Endothelial cell of umbilical vein (primary cell): ENCODE measurements at regions of chr20 and their contacts with region 1.

Region 1: DNA sequence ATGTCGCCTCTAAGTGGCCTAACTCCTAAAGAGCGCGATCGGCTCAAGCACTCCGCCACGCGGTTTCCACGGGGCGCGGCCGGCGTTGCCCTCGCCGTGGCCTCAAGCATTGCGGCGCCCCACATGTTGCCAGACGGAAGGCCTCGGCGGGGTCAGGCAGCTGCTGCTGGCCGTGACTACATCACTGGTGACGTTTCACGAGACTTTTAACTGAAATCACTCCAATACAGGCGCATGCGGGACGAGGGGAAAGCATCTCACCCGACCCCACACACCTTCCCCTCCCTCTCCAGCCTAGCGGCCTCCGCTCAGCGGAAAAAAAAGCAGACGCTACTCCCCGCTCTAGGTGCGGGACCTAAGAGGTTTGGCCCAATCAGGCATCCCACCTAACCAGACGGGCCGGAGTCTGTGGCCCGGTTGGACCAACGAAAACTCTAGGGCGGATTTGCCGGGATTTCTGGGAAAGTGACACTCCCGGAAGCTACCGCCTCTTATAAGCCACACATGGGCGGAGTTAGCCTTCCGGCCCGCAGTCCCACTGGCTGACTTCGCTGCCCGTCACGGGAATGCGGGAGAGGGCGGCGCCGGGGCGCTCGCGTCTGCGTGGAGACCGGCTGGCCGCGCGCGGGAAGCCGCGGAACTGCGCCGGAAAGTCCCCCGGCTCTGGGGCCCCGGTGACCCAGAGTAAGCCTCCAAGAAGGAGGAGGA is at the start of gene NXT1:
- DNase-seq: peak; percentile 98
- H3K4me3 ChIP-seq: peak within 1 kb of the TSS; percentile 20 to 79 (median 77)
- H3K27ac ChIP-seq: peak within 1 kb of the TSS; percentile 94
- H3K4me1 ChIP-seq: peaks cover 19% of the 10 kb centered on the region
- H3K27me3 ChIP-seq: no peaks in the 10 kb centered on the region
- CTCF ChIP-seq: no peak
- POLR2A ChIP-seq: peak; percentile 19
- total RNA-seq, gene NXT1: 27.1 and 28.5 TPM in 2 replicates

Region 2: DNA sequence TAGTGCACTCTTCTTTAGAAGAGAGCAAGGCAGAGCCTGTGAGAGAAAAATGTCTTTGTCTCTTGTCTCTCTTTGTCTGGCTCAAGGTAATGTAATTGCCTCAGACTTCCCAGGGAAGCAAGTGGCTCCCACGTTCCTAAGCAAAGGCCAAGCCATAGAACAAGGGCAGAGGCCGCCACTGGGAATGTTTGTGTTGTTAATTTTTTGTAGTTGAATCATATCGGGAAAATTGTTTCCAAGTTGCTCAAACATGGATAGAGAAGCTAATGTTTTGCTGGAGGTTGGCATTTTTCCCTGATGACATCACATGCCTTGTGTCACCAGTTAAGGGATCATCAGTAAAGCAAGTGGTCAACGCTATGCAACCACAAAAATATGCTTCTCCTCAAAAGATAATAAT is 554.5 kb before region 1 on chr20:
- CTCF ChIA-PET with region 1: no interaction called
- POLR2A ChIA-PET with region 1: no interaction called
- dilution Hi-C with region 1: no loop called
- intact Hi-C with region 1: loop called (anchors 5 kb)
- DNase-seq: peak; percentile 98
- H3K4me3 ChIP-seq: no peak overlapping the region
- H3K27ac ChIP-seq: peak overlapping the region; percentile 100
- H3K4me1 ChIP-seq: peaks cover 43% of the 10 kb centered on the region
- H3K27me3 ChIP-seq: no peaks in the 10 kb centered on the region
- CTCF ChIP-seq: no peak
- POLR2A ChIP-seq: peak; percentile 50

Region 3: GRCh38 chr20:23361598-23362384 is 11.4 kb after region 1 on chr20 and contains the start of gene GZF1:
- CTCF ChIA-PET with region 1: interaction called, 40 read pairs
- POLR2A ChIA-PET with region 1: interaction called, 10 read pairs
- dilution Hi-C with region 1: no loop called
- intact Hi-C with region 1: loop called (anchors 1 kb)
- DNase-seq: peak; percentile 100
- H3K4me3 ChIP-seq: peak within 1 kb of the TSS; percentile 65 to 73 (median 67)
- H3K27ac ChIP-seq: peak within 1 kb of the TSS; percentile 90
- H3K4me1 ChIP-seq: peaks cover 40% of the 10 kb centered on the region
- H3K27me3 ChIP-seq: no peaks in the 10 kb centered on the region
- CTCF ChIP-seq: no peak
- POLR2A ChIP-seq: peak; percentile 93
- total RNA-seq, gene GZF1: 10.0 and 12.5 TPM in 2 replicates

Region 4: GRCh38 chr20:23420943-23421931 is 70.9 kb after region 1 on chr20 and contains the start of gene NAPB:
- CTCF ChIA-PET with region 1: interaction called, 20 read pairs
- POLR2A ChIA-PET with region 1: interaction called, 5 read pairs
- dilution Hi-C with region 1: no loop called
- intact Hi-C with region 1: loop called (anchors 1 kb)
- DNase-seq: peak; percentile 93
- H3K4me3 ChIP-seq: peak within 1 kb of the TSS; percentile 86 to 90 (median 88)
- H3K27ac ChIP-seq: peak within 1 kb of the TSS; percentile 22
- H3K4me1 ChIP-seq: peaks cover 8% of the 10 kb centered on the region
- H3K27me3 ChIP-seq: peaks cover 4 to 7% of the 10 kb centered on the region in 2 experiments
- CTCF ChIP-seq: peak; percentile 14 to 51
- POLR2A ChIP-seq: peak; percentile 91
- total RNA-seq, gene NAPB: 8.1 and 10.1 TPM in 2 replicates

Region 5: DNA sequence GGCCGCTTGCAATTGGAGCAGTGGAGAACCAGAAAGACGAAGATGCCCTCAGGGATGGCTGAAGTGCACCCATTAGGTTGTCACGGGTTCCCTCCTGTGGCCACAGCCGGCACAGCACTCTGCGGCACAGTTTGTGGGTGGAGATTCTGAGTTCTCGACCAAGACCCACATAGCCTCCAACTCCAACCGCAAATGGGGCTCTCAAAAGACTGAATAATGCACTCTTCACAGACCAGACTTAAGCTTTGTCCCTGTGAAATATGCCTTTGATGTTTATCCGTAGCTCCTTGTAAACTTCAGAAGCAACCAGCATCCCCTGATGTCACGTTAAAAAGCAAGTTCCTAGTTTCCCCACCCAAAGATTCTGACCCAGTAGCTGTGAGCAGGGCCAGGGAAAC is 256.3 kb after region 1 on chr20:
- CTCF ChIA-PET with region 1: interaction called, 3 read pairs
- POLR2A ChIA-PET with region 1: no interaction called
- dilution Hi-C with region 1: no loop called
- intact Hi-C with region 1: loop called (anchors 1 kb)
- DNase-seq: peak; percentile 67
- H3K4me3 ChIP-seq: no peak overlapping the region
- H3K27ac ChIP-seq: no peak overlapping the region
- H3K4me1 ChIP-seq: no peaks in the 10 kb centered on the region
- H3K27me3 ChIP-seq: peaks cover 8% of the 10 kb centered on the region in 2 experiments
- CTCF ChIP-seq: peak; percentile 86 to 90
- POLR2A ChIP-seq: no peak